ENCODE measurements at regions of chr19 and their contacts with region 1.

Region 1: GRCh38 chr19:9309139-9309973 is at the start of gene ZNF699:
- DNase-seq: peak; percentile 98 to 99
- ATAC-seq: peak; percentile 98 to 99 (median 99)
- H3K4me3 ChIP-seq: peak within 1 kb of the TSS; percentile 59 to 96 (median 82)
- H3K27ac ChIP-seq: peak within 1 kb of the TSS; percentile 92 to 98 (median 96)
- H3K4me1 ChIP-seq: peaks cover 0 to 26% (median 12%) of the 10 kb centered on the region in 9 donors
- H3K27me3 ChIP-seq: no peaks in the 10 kb centered on the region
- CTCF ChIP-seq: no peak
- total RNA-seq, gene ZNF699: 2.7 to 6.5 (median 4.2) TPM

Region 2: GRCh38 chr19:9140159-9140874 is 169.0 kb before region 1 on chr19 and contains the start of gene ZNF317:
- intact Hi-C with region 1: loop called in 3 of 10 experiments (anchors 2 to 10 kb)
- DNase-seq: peak; percentile 88 to 95
- ATAC-seq: peak; percentile 97 to 99 (median 98)
- H3K4me3 ChIP-seq: peak within 1 kb of the TSS; percentile 64 to 95 (median 84)
- H3K27ac ChIP-seq: peak within 1 kb of the TSS; percentile 59 to 94 (median 90)
- H3K4me1 ChIP-seq: peaks cover 0 to 30% (median 21%) of the 10 kb centered on the region in 9 donors
- H3K27me3 ChIP-seq: no peaks in the 10 kb centered on the region
- CTCF ChIP-seq: no peak
- total RNA-seq, gene ZNF317: 13.4 to 17.8 (median 15.7) TPM

Region 3: GRCh38 chr19:9323919-9324583 is 14.7 kb after region 1 on chr19 and contains the start of gene ZNF559:
- intact Hi-C with region 1: loop called in 1 of 10 experiments (anchors 2 kb)
- DNase-seq: peak; percentile 93 to 96
- ATAC-seq: peak; percentile 96 to 99 (median 98)
- H3K4me3 ChIP-seq: peak within 1 kb of the TSS; percentile 57 to 92 (median 74)
- H3K27ac ChIP-seq: peak within 1 kb of the TSS; percentile 61 to 93 (median 90)
- H3K4me1 ChIP-seq: peaks cover 0 to 22% (median 6%) of the 10 kb centered on the region in 9 donors
- H3K27me3 ChIP-seq: no peaks in the 10 kb centered on the region
- CTCF ChIP-seq: peak in 7 of 9 donors; percentile 8 to 46 (median 26)
- total RNA-seq, gene ZNF559: 9.8 to 21.2 (median 17.5) TPM

Region 4: DNA sequence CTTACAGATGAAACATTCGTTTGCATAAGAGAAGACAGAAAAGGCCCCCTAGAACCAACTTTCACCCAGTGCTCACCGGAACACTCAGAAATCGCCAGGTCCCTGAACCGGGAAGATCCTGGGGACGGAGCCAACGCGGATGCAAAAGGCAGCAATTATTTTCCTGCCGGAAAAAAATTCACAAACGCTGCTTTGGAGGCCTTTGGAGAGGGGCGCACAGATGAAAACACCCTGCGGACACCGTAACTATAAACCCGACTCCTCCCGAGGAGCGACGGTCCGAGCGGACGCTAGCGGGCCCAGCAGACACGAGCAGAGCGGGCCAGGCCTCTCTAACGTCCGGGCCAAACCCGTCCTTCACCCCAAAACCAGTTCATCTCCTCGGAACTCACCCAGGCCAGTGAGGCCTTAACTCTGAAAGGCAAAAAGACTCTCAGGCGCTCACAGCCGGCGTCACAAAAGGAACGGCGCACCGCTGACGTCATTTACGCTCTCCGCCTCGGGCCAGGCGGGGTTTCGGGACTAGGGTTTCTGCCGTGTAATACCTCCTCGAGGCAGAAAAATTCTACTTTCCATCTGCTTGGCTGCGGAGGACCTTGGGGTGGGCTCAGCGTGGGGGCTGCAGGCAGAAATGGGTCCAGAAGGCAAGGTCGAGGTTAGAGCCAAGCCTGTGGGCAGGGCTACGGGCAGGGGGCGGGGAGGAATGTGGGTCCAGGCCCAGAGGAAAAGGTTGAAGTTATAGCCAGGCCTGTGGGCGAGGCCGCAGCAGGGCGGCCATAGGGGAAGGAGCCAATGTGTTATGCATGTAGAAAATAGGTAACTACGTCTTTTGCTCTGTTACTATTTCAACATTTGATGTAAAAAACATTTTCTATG is 229.1 kb after region 1 on chr19 and contains the start of gene ZNF426:
- intact Hi-C with region 1: loop called in 1 of 10 experiments (anchors 5 kb)
- DNase-seq: peak; percentile 87 to 90
- ATAC-seq: peak; percentile 97 to 99 (median 98)
- H3K4me3 ChIP-seq: peak within 1 kb of the TSS; percentile 59 to 97 (median 80)
- H3K27ac ChIP-seq: peak within 1 kb of the TSS; percentile 92 to 98 (median 95)
- H3K4me1 ChIP-seq: peaks cover 0 to 23% (median 16%) of the 10 kb centered on the region in 9 donors
- H3K27me3 ChIP-seq: no peaks in the 10 kb centered on the region
- CTCF ChIP-seq: peak in 1 of 9 donors; percentile 12
- total RNA-seq, gene ZNF426: 14.7 to 20.2 (median 17.0) TPM